Activated CD4-positive, alpha-beta T cell treated with anti-CD3 and anti-CD28 coated beads for 36 hours (primary cell): ENCODE measurements at regions of chr13 and their contacts with region 1.

Region 1: DNA sequence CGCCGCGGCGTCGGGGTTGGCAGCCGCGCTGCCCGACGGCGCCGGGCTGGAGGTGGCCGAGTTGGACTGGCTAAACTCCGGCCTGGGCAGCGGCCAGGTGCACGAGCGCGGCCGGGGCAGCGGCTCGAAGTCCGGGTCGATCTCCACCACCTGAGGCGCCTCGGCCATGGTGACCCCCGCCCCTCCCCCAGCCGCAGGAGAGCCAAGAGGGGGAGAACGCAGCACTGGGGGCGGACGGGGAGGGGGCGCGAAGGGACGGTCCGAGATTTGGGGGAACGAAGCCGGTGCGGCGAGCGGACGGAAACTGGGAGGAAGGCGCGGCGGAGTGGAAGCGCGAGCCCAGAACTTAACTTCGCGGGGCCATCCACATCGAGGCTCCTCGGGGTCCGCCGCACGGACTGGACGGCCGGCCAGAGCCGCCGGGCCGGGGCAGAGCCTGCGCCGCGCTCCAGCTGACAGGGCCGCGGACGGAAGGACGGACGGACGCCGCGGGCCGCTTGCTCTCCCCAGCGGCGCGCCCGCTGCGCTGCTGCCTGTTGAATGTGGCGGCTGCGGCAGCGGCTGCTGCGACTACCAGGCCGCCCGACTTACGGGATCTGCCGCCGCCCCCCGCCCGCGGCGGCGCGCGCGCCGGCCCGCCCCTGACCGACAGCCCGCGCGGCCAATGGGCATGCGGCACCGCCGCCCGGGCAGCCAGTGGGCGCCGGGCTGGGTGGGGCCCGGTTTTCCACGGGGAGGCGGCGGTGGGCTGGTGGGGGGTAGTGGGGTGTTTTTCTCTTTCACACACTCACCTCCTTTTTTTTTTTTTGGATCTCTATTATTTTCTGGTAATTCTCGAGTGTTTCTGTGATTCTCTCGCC is at the start of gene FOXO1:
- DNase-seq: peak; percentile 93
- ATAC-seq: peak; percentile 70
- H3K4me3 Mint-ChIP-seq: peak within 1 kb of the TSS; percentile 91
- H3K27ac Mint-ChIP-seq: peak within 1 kb of the TSS; percentile 92
- H3K4me1 Mint-ChIP-seq: peaks cover 39% of the 10 kb centered on the region
- H3K27me3 Mint-ChIP-seq: no peaks in the 10 kb centered on the region
- total RNA-seq, gene FOXO1: 37.5 to 42.5 TPM

Region 2: DNA sequence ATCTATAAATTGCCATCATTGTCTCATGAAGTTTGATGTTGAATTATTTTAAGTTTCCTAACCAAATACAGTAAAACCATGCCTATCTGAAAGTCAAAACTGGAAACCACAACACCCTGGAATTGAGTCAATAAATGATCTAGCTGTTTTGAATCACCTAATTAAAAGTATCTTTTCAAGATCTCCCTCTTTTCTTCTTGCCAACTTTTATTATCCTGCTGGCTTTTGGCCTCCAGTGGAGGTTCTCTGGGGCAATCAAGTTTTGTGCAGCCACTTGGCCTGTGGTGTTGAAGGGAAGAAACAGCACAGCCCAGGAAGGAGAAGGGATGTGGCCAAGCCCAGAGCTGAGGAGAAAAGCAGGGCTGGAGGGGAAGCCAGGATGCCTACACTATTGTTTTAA is 755.4 kb before region 1 on chr13:
- CTCF ChIA-PET with region 1: no interaction called
- POLR2A ChIA-PET with region 1: no interaction called
- intact Hi-C with region 1: no loop called
- DNase-seq: no peak
- ATAC-seq: peak; percentile 39
- H3K4me3 Mint-ChIP-seq: no peak overlapping the region
- H3K27ac Mint-ChIP-seq: no peak overlapping the region
- H3K4me1 Mint-ChIP-seq: peaks cover 9% of the 10 kb centered on the region
- H3K27me3 Mint-ChIP-seq: peaks cover 16% of the 10 kb centered on the region

Region 3: GRCh38 chr13:40149611-40150274 is 516.5 kb before region 1 on chr13:
- CTCF ChIA-PET with region 1: no interaction called
- POLR2A ChIA-PET with region 1: no interaction called
- intact Hi-C with region 1: loop called in 1 of 2 experiments (anchors 5 kb)
- DNase-seq: peak; percentile 33
- ATAC-seq: peak; percentile 9
- H3K4me3 Mint-ChIP-seq: no peak overlapping the region
- H3K27ac Mint-ChIP-seq: peak overlapping the region; percentile 66
- H3K4me1 Mint-ChIP-seq: peaks cover 72% of the 10 kb centered on the region
- H3K27me3 Mint-ChIP-seq: no peaks in the 10 kb centered on the region

Region 4: DNA sequence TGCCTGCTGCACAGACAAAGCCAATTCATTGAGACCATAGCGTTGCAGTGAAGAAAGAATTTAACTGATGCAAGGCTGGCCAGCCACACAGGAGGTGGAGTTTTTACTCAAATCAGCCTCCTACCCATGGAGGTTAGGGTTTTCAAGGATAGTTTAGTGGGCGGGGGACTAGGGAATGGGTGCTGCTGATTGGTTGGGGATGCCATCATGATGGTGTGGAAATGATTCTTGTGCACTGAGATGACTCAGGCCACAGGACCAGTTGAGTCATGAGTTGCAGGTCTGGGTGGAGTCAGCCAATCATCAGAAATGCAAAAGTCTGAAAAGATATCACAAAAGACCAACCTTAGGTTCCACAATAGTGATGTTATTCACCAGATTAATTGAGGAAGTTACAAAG is 359.5 kb before region 1 on chr13:
- CTCF ChIA-PET with region 1: no interaction called
- POLR2A ChIA-PET with region 1: no interaction called
- intact Hi-C with region 1: loop called (anchors 5 kb)
- DNase-seq: peak; percentile 81
- ATAC-seq: peak; percentile 95
- H3K4me3 Mint-ChIP-seq: no peak overlapping the region
- H3K27ac Mint-ChIP-seq: peak overlapping the region; percentile 69
- H3K4me1 Mint-ChIP-seq: peaks cover 28% of the 10 kb centered on the region
- H3K27me3 Mint-ChIP-seq: no peaks in the 10 kb centered on the region

Region 5: DNA sequence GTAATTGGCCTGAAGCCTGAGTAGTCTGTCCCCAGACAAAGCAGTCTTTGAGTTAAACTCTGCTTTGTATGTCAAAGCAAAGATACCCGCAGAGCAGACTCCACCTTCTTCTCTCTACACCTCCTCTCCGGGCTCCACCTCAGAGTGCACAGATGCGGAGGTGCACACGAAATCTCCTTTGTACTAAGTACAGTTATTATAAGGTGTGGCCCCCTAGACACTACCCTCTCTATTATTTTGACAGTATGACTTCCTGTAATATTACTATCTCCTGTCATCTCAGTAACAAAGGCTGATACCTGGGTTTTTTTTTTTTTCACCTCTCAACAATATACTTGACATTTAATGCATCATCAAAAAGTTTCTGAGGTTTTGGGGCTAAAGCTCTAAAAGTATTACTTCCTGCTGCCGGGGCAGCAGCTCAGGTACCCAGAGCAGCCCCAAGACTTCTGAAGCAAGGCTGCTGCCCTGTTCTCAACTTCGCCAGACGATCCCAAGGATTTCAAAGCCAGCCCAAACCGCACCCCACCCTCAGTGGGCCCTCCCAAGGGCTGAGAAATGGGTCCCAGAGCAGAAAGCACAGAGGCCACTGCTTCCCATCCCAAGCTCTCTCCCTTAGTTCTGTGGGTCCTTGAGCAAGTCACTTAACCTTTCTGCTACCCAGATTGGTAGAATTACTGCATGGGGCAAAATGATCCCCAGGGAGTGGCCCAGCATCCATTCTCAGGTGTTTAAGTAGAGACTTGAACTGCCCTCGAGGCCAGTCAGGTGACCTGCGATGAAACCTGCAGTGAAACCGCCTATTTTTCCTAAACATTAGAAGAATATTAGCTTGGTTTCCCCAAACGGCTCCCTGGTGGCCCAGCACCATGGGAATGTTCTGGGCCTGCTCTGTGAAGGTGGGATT is 180.4 kb before region 1 on chr13:
- CTCF ChIA-PET with region 1: no interaction called
- POLR2A ChIA-PET with region 1: interaction called, 4 read pairs
- intact Hi-C with region 1: loop called (anchors 1 to 5 kb)
- DNase-seq: peak; percentile 80
- ATAC-seq: peak; percentile 94
- H3K4me3 Mint-ChIP-seq: peak overlapping the region; percentile 20
- H3K27ac Mint-ChIP-seq: peak overlapping the region; percentile 93
- H3K4me1 Mint-ChIP-seq: peaks cover 86% of the 10 kb centered on the region
- H3K27me3 Mint-ChIP-seq: no peaks in the 10 kb centered on the region

Region 6: GRCh38 chr13:40624383-40624782 is 41.9 kb before region 1 on chr13:
- CTCF ChIA-PET with region 1: no interaction called
- POLR2A ChIA-PET with region 1: no interaction called
- intact Hi-C with region 1: loop called in 1 of 2 experiments (anchors 2 kb)
- DNase-seq: peak; percentile 78
- ATAC-seq: peak; percentile 86
- H3K4me3 Mint-ChIP-seq: no peak overlapping the region
- H3K27ac Mint-ChIP-seq: peak overlapping the region; percentile 40
- H3K4me1 Mint-ChIP-seq: peaks cover 81% of the 10 kb centered on the region
- H3K27me3 Mint-ChIP-seq: no peaks in the 10 kb centered on the region

Region 7: DNA sequence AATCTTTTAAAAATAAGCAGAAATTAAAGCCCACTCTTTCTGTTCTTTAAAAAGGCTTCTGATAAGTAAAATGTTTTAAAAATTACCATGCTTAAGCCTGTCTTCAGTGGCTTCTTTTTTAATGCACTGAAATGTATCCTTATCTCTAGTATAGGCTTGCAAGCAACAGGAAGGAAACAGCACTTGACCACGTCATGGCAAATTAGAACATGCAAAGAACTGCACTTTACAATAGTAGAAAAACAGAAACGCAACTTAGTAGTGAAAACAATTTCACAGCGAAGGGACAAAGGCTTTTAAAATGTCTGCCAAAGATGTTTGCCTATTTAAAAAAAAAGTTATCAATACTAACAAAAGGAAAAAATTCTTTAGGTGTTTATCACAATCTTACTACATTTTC is 316.5 kb after region 1 on chr13:
- CTCF ChIA-PET with region 1: interaction called, 3 read pairs
- POLR2A ChIA-PET with region 1: no interaction called
- intact Hi-C with region 1: loop called (anchors 1 to 10 kb)
- DNase-seq: peak; percentile 70
- ATAC-seq: peak; percentile 62
- H3K4me3 Mint-ChIP-seq: peak overlapping the region; percentile 91
- H3K27ac Mint-ChIP-seq: peak overlapping the region; percentile 92
- H3K4me1 Mint-ChIP-seq: peaks cover 66% of the 10 kb centered on the region
- H3K27me3 Mint-ChIP-seq: no peaks in the 10 kb centered on the region

Region 8: GRCh38 chr13:41452462-41452861 is 786.2 kb after region 1 on chr13:
- CTCF ChIA-PET with region 1: no interaction called
- POLR2A ChIA-PET with region 1: no interaction called
- intact Hi-C with region 1: no loop called
- DNase-seq: no peak
- ATAC-seq: peak; percentile 23
- H3K4me3 Mint-ChIP-seq: no peak overlapping the region
- H3K27ac Mint-ChIP-seq: no peak overlapping the region
- H3K4me1 Mint-ChIP-seq: peaks cover 12% of the 10 kb centered on the region
- H3K27me3 Mint-ChIP-seq: no peaks in the 10 kb centered on the region